Thyroid gland (tissue), 4 donors: ENCODE measurements at regions of chr11 and their contacts with region 1.

Region 1: GRCh38 chr11:67119585-67120391 is 725 bp downstream of the KDM2A start:
- DNase-seq: peak; percentile 50 to 52
- H3K4me3 ChIP-seq: peak overlapping the region; percentile 22 to 84 (median 68)
- H3K27ac ChIP-seq: peak overlapping the region; percentile 92 to 96 (median 96)
- H3K4me1 ChIP-seq: peaks cover 23 to 39% of the 10 kb centered on the region in 2 donors
- H3K27me3 ChIP-seq: no peaks in the 10 kb centered on the region
- CTCF ChIP-seq: peak in 1 of 6 experiments; percentile 29
- POLR2A ChIP-seq: no peak

Region 2: DNA sequence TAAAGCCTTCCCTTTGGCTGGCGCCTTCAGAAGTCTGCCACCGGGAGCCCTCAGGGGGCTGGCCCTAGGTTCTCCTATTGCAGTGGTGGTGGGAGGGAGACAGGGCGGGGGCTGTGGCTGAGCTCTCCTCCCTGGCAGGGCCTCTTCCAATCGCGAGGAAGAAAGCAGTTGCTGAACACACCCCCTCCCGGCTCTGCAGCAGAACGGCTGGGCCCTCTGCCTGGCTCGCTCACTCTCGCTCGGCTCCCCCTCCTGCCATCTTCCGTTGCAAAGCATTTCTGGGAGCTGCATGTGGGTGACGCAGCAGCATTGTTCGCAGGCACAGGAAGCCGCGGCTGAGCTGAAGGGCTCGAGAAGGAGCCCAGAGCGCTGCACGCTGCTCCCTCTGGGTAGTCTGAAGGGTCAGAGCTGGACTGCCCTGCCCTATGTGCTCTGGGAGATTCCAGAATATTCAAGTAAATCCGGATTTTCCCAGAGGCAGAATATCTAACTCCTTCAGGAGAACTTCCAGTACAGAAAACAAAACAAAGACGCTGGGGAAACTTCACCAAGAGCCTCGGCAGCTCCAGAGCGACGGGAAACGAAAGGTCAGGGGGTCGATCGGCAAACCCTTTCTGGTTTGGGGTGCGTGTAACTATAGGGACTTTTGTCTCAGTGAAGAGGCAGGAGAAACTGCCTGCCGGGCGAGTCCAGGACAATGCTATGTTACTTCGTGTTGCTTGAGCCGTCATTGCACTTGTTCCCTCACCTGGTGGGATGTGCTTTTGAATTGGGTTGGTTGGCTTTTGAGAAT is 120.2 kb after region 1 on chr11:
- intact Hi-C with region 1: loop called (anchors 10 kb)
- DNase-seq: peak; percentile 98 to 99
- H3K4me3 ChIP-seq: peak overlapping the region; percentile 57 to 86 (median 63)
- H3K27ac ChIP-seq: peak overlapping the region; percentile 91 to 96 (median 92)
- H3K4me1 ChIP-seq: peaks cover 43 to 52% of the 10 kb centered on the region in 2 donors
- H3K27me3 ChIP-seq: no peaks in the 10 kb centered on the region
- CTCF ChIP-seq: peak in 1 of 6 experiments; percentile 17
- POLR2A ChIP-seq: peak; percentile 43 to 99

Region 3: GRCh38 chr11:67293090-67293489 is 173.3 kb after region 1 on chr11:
- intact Hi-C with region 1: no loop called
- DNase-seq: no peak
- H3K4me3 ChIP-seq: no peak overlapping the region
- H3K27ac ChIP-seq: no peak overlapping the region
- H3K4me1 ChIP-seq: peaks cover 10 to 15% of the 10 kb centered on the region in 2 donors
- H3K27me3 ChIP-seq: no peaks in the 10 kb centered on the region
- CTCF ChIP-seq: no peak
- POLR2A ChIP-seq: no peak

Region 4: GRCh38 chr11:67317205-67317887 is 197.6 kb after region 1 on chr11:
- intact Hi-C with region 1: no loop called
- DNase-seq: peak; percentile 96 to 98
- H3K4me3 ChIP-seq: peak overlapping the region; percentile 38 to 94 (median 92)
- H3K27ac ChIP-seq: peak overlapping the region; percentile 95 to 97 (median 96)
- H3K4me1 ChIP-seq: peaks cover 15 to 16% of the 10 kb centered on the region in 2 donors
- H3K27me3 ChIP-seq: no peaks in the 10 kb centered on the region
- CTCF ChIP-seq: peak; percentile 58 to 99 (median 96)
- POLR2A ChIP-seq: peak in 1 of 2 donors; percentile 72